ENCODE measurements at regions of chr11 and their contacts with region 1.

Region 1: DNA sequence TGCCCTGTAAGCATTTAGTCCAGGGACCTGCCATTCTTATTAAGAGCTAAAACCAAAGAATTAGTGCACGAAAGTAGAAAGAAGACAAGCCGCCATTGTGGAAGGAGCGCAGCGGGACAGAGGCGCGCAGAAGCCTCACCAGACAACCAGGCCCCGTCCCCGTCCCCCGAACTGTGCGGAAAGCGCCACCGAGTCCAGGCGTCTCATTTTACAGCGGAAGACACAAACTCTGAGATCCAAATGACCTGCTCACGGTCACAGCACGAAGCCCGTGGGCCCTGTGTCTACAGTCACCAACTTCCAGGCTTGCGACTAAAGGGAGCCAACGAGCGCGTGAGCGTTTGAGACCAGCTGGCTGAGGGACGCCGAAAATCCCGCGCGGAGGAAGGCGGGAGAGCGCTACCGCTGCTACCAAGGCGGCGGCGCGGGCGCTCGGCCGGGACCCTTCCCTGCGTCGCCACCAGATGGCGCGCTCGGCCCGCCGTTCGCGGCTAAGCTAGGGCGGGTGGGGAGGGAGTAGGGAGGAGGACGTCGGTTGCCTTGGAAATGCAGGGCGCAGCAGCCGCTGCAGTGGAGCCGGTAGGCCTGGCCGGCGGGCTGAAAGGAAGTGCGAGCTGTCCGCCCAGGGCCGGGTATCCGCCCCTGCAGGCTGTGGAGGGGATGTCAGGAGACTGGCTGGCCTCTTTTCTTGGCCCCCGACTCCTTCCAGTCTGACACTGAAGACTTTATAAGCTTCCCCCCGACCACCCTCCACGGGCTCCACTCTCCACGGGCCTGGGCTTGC is 434 bp upstream of the CCDC83 start:
- DNase-seq: peak; percentile 86
- H3K4me3 ChIP-seq: peak overlapping the region; percentile 37
- H3K27ac ChIP-seq: peak overlapping the region; percentile 70 to 88
- H3K4me1 ChIP-seq: no peaks in the 10 kb centered on the region
- H3K27me3 ChIP-seq: no peaks in the 10 kb centered on the region
- CTCF ChIP-seq: peak; percentile 95 to 99 (median 96)
- POLR2A ChIP-seq: no peak

Region 2: GRCh38 chr11:85682330-85683305 is 172.1 kb before region 1 on chr11:
- intact Hi-C with region 1: loop called (anchors 10 kb)
- DNase-seq: peak; percentile 58
- H3K4me3 ChIP-seq: peak overlapping the region; percentile 52 to 57
- H3K27ac ChIP-seq: peak overlapping the region; percentile 36 to 56
- H3K4me1 ChIP-seq: no peaks in the 10 kb centered on the region
- H3K27me3 ChIP-seq: no peaks in the 10 kb centered on the region
- CTCF ChIP-seq: no peak
- POLR2A ChIP-seq: peak; percentile 13

Region 3: DNA sequence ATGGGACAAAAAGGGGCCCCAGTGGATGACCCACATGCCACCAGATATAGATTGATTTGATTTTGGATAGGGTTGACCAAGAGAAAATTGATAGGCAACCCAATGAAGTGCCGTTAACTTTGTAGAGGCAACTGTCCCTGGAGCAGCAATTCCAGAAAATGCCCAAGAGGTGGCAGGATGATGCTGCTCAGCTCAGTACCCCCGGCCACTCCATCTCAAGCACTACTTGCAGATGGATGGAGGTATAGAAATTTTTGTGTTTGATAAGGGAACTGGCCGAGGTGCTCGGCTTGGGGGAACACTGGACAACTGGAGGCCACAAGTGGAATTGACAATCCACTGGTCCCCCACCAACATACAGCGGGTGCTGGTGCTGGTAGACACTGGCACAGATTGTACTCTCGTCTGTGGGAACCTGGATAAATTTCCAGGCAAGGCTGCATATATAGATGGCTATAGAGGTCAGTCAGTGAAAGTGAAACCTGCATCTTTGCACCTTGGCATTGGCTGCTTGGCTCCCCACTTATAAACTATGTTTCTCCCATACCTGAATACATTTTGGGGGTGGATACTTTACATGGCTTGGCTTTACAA is 86.7 kb after region 1 on chr11:
- intact Hi-C with region 1: loop called (anchors 10 kb)
- DNase-seq: peak; percentile 37
- H3K4me3 ChIP-seq: no peak overlapping the region
- H3K27ac ChIP-seq: no peak overlapping the region
- H3K4me1 ChIP-seq: no peaks in the 10 kb centered on the region
- H3K27me3 ChIP-seq: no peaks in the 10 kb centered on the region
- CTCF ChIP-seq: peak in 3 of 4 experiments; percentile 55 to 70 (median 61)
- POLR2A ChIP-seq: no peak

Region 4: DNA sequence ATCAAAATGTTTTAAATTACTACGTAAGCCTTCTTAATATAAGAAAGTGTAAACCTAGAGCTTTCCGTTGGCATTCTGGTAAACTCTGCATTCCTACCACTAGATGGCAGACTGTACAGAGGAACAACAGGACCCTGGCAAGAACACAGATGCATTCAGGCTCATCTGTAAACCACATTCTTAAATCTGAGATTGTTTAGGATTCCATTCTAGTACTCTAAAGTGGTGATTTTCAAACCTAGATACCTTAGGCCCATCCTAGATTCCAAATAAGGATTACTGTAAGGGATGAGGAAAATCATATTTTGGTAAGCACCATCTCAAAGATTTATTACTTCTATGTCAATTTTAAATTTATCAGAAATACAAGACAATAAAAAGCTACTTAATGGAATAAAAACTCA is 187.2 kb after region 1 on chr11:
- intact Hi-C with region 1: loop called (anchors 10 kb)
- DNase-seq: peak; percentile 84
- H3K4me3 ChIP-seq: no peak overlapping the region
- H3K27ac ChIP-seq: peak overlapping the region in 1 of 2 donors; percentile 26
- H3K4me1 ChIP-seq: no peaks in the 10 kb centered on the region
- H3K27me3 ChIP-seq: no peaks in the 10 kb centered on the region
- CTCF ChIP-seq: peak; percentile 86 to 94 (median 88)
- POLR2A ChIP-seq: no peak

Region 5: GRCh38 chr11:86218125-86219084 is 363.7 kb after region 1 on chr11:
- intact Hi-C with region 1: loop called (anchors 1 kb)
- DNase-seq: peak; percentile 46
- H3K4me3 ChIP-seq: no peak overlapping the region
- H3K27ac ChIP-seq: no peak overlapping the region
- H3K4me1 ChIP-seq: no peaks in the 10 kb centered on the region
- H3K27me3 ChIP-seq: no peaks in the 10 kb centered on the region
- CTCF ChIP-seq: peak; percentile 42 to 85 (median 78)
- POLR2A ChIP-seq: no peak

Region 6: DNA sequence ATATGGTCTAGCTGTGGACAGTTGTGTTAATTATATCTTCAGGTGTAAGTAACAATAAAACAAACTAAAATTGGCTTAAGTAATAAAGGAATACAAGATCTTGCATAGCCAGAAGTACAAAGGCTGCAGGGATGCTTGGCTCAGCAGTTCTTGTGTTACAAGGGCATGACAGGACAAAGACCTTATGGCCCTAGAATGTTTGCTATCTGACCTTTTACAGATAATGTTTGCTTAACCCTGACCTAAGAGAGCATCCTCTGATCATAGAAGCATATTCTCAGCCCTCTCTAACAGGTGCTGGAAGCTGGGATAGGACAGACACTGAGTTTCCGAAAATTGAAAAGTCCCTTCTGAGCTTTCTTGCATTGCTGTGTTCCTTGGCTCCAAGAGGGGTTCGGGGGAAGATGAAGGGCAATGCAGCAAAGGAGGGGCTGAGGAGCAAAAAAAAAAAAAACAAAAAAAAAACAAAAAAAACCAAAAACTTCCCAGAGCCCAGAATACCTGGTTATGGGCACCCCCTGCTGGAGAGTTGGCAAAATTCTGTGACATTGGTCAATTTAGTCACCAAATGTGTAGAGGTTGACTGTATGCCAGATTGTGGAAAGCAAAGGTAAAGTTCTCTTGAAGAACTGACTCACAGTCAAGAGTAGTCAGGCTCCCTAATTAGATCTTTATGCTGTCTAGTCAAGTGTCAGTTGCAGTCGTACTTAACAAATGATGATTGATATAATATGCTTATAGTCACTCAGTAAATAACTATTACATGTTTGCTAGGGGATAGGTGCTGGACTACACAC is 436.9 kb after region 1 on chr11:
- intact Hi-C with region 1: loop called (anchors 5 kb)
- DNase-seq: peak; percentile 12
- H3K4me3 ChIP-seq: no peak overlapping the region
- H3K27ac ChIP-seq: no peak overlapping the region
- H3K4me1 ChIP-seq: no peaks in the 10 kb centered on the region
- H3K27me3 ChIP-seq: no peaks in the 10 kb centered on the region
- CTCF ChIP-seq: peak; percentile 16 to 56 (median 39)
- POLR2A ChIP-seq: no peak

Region 7: GRCh38 chr11:86818466-86819192 is 963.9 kb after region 1 on chr11:
- intact Hi-C with region 1: loop called (anchors 10 kb)
- DNase-seq: peak; percentile 31
- H3K4me3 ChIP-seq: no peak overlapping the region
- H3K27ac ChIP-seq: no peak overlapping the region
- H3K4me1 ChIP-seq: no peaks in the 10 kb centered on the region
- H3K27me3 ChIP-seq: no peaks in the 10 kb centered on the region
- CTCF ChIP-seq: peak; percentile 62 to 88 (median 83)
- POLR2A ChIP-seq: no peak

Measured in prostate gland (tissue), 2 donors.